CD8-positive, alpha-beta T cell (primary cell): ENCODE measurements at regions of chr7 and their contacts with region 1.

Region 1: GRCh38 chr7:23546897-23547572 is 15.3 kb upstream of the TRA2A start:
- DNase-seq: peak; percentile 59 to 92 (median 75)
- ATAC-seq: peak; percentile 95
- H3K4me3 ChIP-seq: no peak overlapping the region
- H3K4me3 Mint-ChIP-seq: no peak overlapping the region
- H3K27ac ChIP-seq: no peak overlapping the region
- H3K27ac Mint-ChIP-seq: no peak overlapping the region
- H3K4me1 ChIP-seq: no peaks in the 10 kb centered on the region
- H3K4me1 Mint-ChIP-seq: peaks cover 9% of the 10 kb centered on the region
- H3K27me3 ChIP-seq: no peaks in the 10 kb centered on the region
- H3K27me3 Mint-ChIP-seq: no peaks in the 10 kb centered on the region
- CTCF ChIP-seq: peak; percentile 97

Region 2: DNA sequence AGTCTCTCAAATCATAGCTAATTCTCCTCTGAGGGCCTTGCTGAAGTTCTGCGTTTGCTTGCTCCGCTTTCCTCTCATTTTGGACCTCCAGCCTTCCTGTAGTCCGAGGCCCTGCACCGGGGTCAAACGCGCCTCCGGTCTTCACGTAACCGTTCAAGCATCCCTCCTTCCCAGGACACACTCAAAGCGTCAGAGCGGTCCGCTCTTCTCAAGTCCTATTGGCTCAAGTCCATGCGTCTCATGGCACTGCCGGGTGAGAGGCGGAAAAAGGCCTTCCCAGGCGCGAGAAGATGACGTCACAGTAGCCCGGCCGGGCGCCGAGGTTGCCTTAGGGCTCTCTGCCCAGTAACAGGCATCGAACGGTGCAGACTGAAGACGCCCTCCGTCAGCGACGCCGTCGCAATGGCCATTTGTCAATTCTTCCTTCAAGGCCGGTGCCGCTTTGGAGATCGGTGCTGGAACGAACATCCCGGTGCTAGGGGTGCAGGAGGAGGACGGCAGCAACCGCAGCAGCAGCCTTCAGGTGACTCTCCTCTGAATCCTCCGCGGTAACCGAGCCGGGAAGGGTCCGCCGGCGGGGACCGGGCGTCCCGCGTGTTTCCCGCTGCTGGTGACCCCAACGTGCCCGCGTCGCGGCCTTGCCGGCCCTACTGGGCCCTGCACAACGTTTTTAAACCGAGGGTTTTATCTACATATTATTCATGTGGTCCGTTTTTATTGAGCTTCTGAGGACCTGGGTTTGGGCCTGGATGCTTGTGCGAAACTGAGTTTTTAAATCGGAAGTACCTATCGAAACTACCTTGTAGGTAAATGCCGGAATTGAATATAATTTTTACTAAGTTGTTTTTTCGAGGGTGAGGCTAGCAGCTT is 365.1 kb before region 1 on chr7 and contains the start of gene NUP42:
- CTCF ChIA-PET with region 1: interaction called, 3 read pairs
- POLR2A ChIA-PET with region 1: no interaction called
- intact Hi-C with region 1: loop called in 1 of 2 experiments (anchors 5 kb)
- DNase-seq: peak; percentile 89 to 98 (median 95)
- ATAC-seq: peak; percentile 90
- H3K4me3 ChIP-seq: peak within 1 kb of the TSS; percentile 77 to 84
- H3K4me3 Mint-ChIP-seq: peak within 1 kb of the TSS; percentile 100
- H3K27ac ChIP-seq: peak within 1 kb of the TSS; percentile 86 to 91
- H3K27ac Mint-ChIP-seq: peak within 1 kb of the TSS; percentile 100
- H3K4me1 ChIP-seq: peaks cover 30% of the 10 kb centered on the region
- H3K4me1 Mint-ChIP-seq: peaks cover 39% of the 10 kb centered on the region
- H3K27me3 ChIP-seq: no peaks in the 10 kb centered on the region
- H3K27me3 Mint-ChIP-seq: no peaks in the 10 kb centered on the region
- CTCF ChIP-seq: no peak
- total RNA-seq, gene NUP42: 17.3 to 20.4 TPM

Region 3: GRCh38 chr7:23431702-23432199 is 115.3 kb before region 1 on chr7:
- CTCF ChIA-PET with region 1: interaction called, 11 read pairs
- POLR2A ChIA-PET with region 1: no interaction called
- intact Hi-C with region 1: loop called in 1 of 2 experiments (anchors 2 kb)
- DNase-seq: no peak
- ATAC-seq: no peak
- H3K4me3 ChIP-seq: no peak overlapping the region
- H3K4me3 Mint-ChIP-seq: no peak overlapping the region
- H3K27ac ChIP-seq: no peak overlapping the region
- H3K27ac Mint-ChIP-seq: no peak overlapping the region
- H3K4me1 ChIP-seq: no peaks in the 10 kb centered on the region
- H3K4me1 Mint-ChIP-seq: no peaks in the 10 kb centered on the region
- H3K27me3 ChIP-seq: peaks cover 0 to 3% of the 10 kb centered on the region in 2 experiments
- H3K27me3 Mint-ChIP-seq: peaks cover 28% of the 10 kb centered on the region
- CTCF ChIP-seq: no peak

Region 4: DNA sequence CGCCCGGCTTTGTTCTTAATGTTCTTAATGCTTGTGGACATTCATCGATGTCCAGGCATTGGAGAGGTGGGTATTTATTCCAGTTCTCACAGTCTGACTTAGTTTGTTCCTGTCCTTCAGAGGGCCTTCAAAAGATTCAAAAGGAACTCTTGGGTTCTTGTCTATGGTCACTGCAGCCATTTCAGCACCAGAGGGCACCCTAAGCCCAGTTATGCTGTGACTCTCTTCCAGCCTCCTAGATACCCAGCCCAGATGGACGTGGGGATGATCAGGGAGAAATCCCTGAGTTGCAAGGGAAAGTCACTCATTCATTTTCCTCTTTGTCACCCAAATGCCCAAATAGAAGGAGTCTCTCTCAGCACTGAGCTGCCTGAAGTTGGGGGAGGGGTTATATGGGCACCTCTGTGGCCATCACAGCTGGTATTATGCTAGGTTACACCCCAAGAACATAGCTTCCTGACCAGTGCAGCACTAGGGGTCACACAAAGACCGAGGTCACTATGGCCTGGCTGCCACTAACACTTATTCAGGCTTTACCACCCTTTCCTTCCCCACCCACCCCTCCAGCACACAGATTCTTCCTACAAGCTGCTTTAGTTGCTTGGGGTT is 23.7 kb after region 1 on chr7:
- CTCF ChIA-PET with region 1: interaction called, 17 read pairs
- POLR2A ChIA-PET with region 1: no interaction called
- intact Hi-C with region 1: loop called in 1 of 2 experiments (anchors 1 kb)
- DNase-seq: peak; percentile 40 to 81 (median 66)
- ATAC-seq: peak; percentile 83
- H3K4me3 ChIP-seq: no peak overlapping the region
- H3K4me3 Mint-ChIP-seq: no peak overlapping the region
- H3K27ac ChIP-seq: no peak overlapping the region
- H3K27ac Mint-ChIP-seq: no peak overlapping the region
- H3K4me1 ChIP-seq: no peaks in the 10 kb centered on the region
- H3K4me1 Mint-ChIP-seq: no peaks in the 10 kb centered on the region
- H3K27me3 ChIP-seq: no peaks in the 10 kb centered on the region
- H3K27me3 Mint-ChIP-seq: peaks cover 16% of the 10 kb centered on the region
- CTCF ChIP-seq: peak; percentile 67

Region 5: DNA sequence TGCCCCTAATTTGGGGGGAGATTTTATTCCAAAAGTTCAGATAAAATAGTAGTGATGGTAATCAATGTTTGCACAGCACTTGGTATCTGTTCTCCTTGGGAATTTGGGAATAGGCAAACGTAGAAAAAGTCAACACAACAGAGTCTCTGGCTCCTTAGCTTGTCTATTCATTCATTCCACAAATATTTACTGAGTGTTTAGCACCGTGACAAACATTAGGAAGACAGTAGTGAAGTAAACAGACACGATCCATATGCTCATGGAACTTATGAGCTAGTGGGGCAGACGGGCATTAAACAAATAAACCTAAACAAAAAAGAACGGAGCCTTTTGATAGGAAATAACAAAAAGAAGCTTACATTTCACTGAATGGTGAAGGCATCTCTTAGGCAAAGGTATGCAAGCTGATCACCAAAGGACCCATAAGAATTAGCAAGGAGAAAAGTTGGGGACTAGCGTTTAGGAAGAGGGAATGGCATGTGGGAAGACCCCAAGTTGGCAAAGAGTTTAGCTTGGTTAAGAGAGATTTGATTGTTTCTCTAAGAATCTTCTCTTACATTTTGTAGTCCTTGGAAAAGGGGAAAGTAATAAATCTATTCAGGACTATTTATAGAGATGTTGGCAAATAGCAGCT is 493.1 kb after region 1 on chr7:
- CTCF ChIA-PET with region 1: no interaction called
- POLR2A ChIA-PET with region 1: no interaction called
- intact Hi-C with region 1: no loop called
- DNase-seq: no peak
- ATAC-seq: no peak
- H3K4me3 ChIP-seq: no peak overlapping the region
- H3K4me3 Mint-ChIP-seq: no peak overlapping the region
- H3K27ac ChIP-seq: no peak overlapping the region
- H3K27ac Mint-ChIP-seq: no peak overlapping the region
- H3K4me1 ChIP-seq: no peaks in the 10 kb centered on the region
- H3K4me1 Mint-ChIP-seq: peaks cover 8% of the 10 kb centered on the region
- H3K27me3 ChIP-seq: no peaks in the 10 kb centered on the region
- H3K27me3 Mint-ChIP-seq: no peaks in the 10 kb centered on the region
- CTCF ChIP-seq: no peak

Region 6: GRCh38 chr7:24057243-24057642 is 510.2 kb after region 1 on chr7:
- CTCF ChIA-PET with region 1: no interaction called
- POLR2A ChIA-PET with region 1: no interaction called
- intact Hi-C with region 1: no loop called
- DNase-seq: no peak
- ATAC-seq: no peak
- H3K4me3 ChIP-seq: no peak overlapping the region
- H3K4me3 Mint-ChIP-seq: no peak overlapping the region
- H3K27ac ChIP-seq: no peak overlapping the region
- H3K27ac Mint-ChIP-seq: no peak overlapping the region
- H3K4me1 ChIP-seq: no peaks in the 10 kb centered on the region
- H3K4me1 Mint-ChIP-seq: no peaks in the 10 kb centered on the region
- H3K27me3 ChIP-seq: no peaks in the 10 kb centered on the region
- H3K27me3 Mint-ChIP-seq: peaks cover 8% of the 10 kb centered on the region
- CTCF ChIP-seq: no peak

Region 7: GRCh38 chr7:24587848-24588247 is 1040.8 kb after region 1 on chr7:
- CTCF ChIA-PET with region 1: no interaction called
- POLR2A ChIA-PET with region 1: no interaction called
- intact Hi-C with region 1: loop called in 1 of 2 experiments (anchors 5 kb)
- DNase-seq: peak; percentile 25 to 80 (median 67)
- ATAC-seq: peak; percentile 95
- H3K4me3 ChIP-seq: no peak overlapping the region
- H3K4me3 Mint-ChIP-seq: no peak overlapping the region
- H3K27ac ChIP-seq: no peak overlapping the region
- H3K27ac Mint-ChIP-seq: no peak overlapping the region
- H3K4me1 ChIP-seq: no peaks in the 10 kb centered on the region
- H3K4me1 Mint-ChIP-seq: peaks cover 12% of the 10 kb centered on the region
- H3K27me3 ChIP-seq: no peaks in the 10 kb centered on the region
- H3K27me3 Mint-ChIP-seq: no peaks in the 10 kb centered on the region
- CTCF ChIP-seq: peak; percentile 97